Ascending aorta (tissue), 2 donors: ENCODE measurements at regions of chr16 and their contacts with region 1.

Region 1: DNA sequence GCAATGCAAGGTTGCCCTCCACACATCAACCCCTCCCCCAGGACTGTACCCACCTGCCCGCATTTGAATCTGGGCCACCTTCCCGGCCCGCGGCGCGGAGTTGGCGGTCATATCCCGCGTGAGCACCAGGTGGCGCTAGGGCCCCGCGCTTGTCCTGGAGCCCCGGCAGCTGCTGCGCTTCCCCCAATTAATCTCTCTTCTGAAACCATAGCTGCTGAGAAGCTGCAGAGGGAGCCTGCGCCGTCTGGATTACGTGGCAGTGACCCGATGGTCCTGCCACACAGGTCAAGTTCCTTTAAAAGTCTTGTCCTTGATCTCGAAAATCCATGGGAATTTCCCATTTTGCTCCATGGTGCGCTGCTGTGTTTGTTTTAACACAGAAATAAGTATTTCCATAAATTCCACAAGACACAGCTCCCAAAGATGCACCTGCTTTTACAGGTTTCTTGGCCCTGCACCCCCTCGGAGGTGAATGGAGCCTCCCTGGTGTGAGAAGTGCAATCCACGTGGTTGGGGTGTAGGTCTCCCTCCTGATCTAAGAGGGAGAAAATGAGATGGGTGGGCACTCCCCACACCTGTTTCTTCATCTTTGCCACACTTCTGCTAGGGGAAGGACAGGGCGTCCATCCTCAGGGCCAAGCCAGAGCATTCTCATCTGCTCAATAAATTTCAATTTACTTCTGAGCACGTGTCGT is 22.1 kb downstream of the COX4I1 start:
- DNase-seq: peak in 1 of 2 donors; percentile 81
- H3K4me3 ChIP-seq: no peak overlapping the region
- H3K27ac ChIP-seq: no peak overlapping the region
- H3K4me1 ChIP-seq: no peaks in the 10 kb centered on the region
- H3K27me3 ChIP-seq: no peaks in the 10 kb centered on the region
- CTCF ChIP-seq: peak; percentile 92 to 96 (median 96)

Region 2: DNA sequence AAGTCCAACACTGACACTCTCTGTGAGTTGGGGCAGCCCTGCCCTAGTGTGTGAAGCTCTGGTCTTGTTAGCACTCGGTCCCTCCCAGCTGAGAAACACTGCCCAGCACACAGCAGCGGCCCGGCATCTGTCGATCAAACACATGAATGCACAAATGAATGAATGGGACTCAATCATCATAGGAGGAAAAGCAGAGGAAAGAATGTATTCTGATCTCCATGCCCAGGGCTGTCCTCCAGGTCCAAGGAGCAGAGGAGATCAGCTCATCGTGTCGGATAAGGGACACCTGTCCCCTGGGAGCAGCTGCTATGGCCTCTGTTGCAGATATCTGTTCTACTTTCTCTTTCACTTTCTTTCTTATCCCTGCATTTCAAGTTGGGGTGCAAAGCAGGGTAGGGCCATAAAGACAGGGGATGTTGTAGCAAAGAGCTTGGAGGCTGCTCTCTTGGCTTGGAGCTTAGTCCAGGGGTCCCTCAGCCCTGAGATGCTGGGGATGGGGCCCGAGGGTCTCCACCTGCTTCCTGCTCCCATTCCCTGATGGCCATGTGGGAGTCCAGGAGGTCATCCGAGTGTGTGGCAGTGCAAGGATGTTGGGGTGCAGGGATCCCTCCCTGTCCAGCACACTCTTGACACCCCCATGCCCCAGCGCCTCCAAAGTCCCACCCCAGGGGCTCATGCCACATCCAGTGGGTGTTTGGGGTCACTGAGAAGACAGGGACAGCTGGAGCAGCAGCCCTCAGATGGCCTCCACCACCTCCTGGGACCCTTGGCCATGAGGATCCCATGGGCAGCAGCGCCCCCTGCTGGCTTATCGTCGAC is 165.6 kb after region 1 on chr16:
- intact Hi-C with region 1: loop called (anchors 2 kb)
- DNase-seq: no peak
- H3K4me3 ChIP-seq: no peak overlapping the region
- H3K27ac ChIP-seq: no peak overlapping the region
- H3K4me1 ChIP-seq: no peaks in the 10 kb centered on the region
- H3K27me3 ChIP-seq: no peaks in the 10 kb centered on the region
- CTCF ChIP-seq: peak; percentile 7 to 55 (median 11)

Region 3: DNA sequence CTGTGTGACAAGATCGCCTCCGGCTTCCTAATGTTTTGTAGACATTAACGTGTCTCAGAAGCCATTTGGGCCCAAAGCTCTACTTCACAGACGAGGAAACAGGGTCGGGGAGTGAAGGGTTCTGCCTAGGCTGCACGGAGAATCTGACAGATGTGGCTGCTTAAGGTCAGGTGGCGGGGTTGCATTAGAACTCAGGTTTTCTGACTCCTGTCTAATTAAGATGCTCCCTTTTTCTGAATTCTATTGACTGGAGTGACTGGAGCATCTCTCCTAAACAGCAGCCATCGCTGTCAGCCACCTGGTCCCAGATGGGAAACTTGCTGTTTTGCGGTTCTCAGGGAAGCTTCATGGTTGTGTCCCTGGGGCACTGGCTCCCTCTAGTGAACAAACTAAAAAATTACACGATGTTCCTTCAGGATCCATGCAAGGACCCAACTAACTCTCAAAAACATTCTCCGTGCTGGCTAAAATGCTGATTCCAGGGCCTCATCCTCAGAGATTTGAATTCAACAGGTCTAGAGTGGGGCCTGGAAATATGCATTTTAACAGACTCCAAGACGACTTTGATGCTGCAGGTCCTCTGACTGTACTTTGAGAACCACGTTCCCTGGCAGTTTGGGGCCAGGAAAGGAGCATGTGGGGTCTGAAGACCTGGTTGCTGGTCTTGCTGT is 194.7 kb after region 1 on chr16:
- intact Hi-C with region 1: loop called (anchors 2 kb)
- DNase-seq: no peak
- H3K4me3 ChIP-seq: no peak overlapping the region
- H3K27ac ChIP-seq: no peak overlapping the region
- H3K4me1 ChIP-seq: no peaks in the 10 kb centered on the region
- H3K27me3 ChIP-seq: no peaks in the 10 kb centered on the region
- CTCF ChIP-seq: peak; percentile 47 to 72 (median 56)

Region 4: DNA sequence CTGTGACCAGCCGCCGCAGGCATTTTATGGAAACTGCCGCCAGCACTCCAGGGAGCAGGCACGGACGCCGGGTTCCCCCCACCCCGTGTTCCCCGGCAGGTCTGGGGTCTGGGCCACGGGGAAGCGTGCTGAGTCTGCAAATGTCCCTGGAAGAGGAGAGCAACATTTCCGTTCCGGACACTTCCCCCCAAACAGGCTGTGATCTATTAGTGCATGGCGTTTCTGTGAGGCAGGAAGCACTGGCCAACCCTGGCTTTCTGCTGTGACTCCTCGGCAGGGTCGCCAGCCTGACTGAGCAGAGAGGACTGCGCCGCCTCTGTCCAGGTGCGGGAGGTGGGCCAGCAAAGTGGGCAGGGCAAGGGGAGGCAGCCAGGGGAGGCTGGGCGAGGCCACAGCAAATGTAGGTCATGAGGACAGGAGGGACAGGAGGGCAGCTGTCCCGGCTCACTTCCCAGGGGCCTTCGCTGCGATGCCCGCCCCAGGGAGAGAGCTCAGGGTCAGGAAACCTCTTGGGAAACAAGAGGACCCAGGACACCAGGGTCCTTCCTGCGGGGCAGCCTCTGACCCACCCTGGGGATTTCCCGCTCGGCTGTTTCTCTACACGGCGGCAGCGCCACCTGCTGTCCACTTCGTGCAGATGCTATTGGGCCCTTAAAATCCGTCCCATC is 698.2 kb after region 1 on chr16:
- intact Hi-C with region 1: loop called (anchors 2 kb)
- DNase-seq: no peak
- H3K4me3 ChIP-seq: peak overlapping the region in 1 of 2 donors; percentile 33
- H3K27ac ChIP-seq: no peak overlapping the region
- H3K4me1 ChIP-seq: peaks cover 0 to 9% of the 10 kb centered on the region in 2 donors
- H3K27me3 ChIP-seq: peaks cover 13% of the 10 kb centered on the region
- CTCF ChIP-seq: peak; percentile 82 to 90 (median 87)